ENCODE measurements at regions of chr3 and their contacts with region 1.

Region 1: DNA sequence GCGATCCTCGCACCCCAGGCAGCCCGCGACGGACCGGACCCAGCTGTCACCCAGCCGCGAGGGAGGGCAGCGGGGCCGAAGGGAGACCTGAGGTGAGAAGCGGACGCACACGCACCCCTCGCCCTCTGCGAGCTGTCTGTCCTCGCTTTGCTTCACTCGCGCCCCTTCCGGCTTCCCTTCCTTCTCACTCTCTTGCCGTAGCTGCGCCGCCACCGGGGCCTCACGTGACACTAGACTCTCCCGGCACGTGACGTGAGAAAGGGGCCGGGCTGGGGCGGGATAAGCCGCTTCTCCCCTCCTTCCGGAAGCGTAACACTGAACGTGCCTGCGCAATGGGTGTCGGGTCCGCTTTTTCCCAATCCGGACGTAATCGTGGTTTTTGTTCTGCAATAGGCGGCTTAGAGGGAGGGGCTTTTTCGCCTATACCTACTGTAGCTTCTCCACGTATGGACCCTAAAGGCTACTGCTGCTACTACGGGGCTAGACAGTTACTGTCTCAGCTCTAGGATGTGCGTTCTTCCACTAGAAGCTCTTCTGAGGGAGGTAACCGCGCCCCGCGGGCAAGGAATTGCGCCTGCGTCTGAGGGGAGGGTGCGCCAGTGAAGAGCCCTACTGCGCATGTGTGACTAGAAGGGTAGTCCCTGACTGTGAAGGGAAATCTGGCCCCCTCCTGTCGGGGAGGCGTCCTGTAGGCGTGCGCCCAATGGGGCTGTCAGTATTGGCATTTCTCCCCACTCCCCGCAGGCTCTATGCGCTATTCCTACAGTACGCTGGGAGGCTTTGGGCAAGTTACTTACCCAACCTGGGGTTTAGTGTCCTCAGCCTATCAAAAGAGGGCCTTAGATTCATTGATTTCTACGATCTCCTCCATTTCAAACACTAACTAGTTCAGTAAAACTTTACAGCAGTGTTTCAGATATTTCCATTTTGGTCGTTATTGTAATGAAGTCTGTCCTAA is at the starts of genes ATG3 and SLC35A5:
- DNase-seq: peak; percentile 99
- ATAC-seq: peak; percentile 79
- H3K4me3 ChIP-seq: peak within 1 kb of the TSS; percentile 75 to 99 (median 94)
- H3K4me3 Mint-ChIP-seq: peak within 1 kb of the TSS; percentile 99
- H3K27ac ChIP-seq: peak within 1 kb of the TSS; percentile 93 to 96
- H3K27ac Mint-ChIP-seq: peak within 1 kb of the TSS; percentile 100
- H3K4me1 ChIP-seq: peaks cover 23 to 34% of the 10 kb centered on the region in 2 donors
- H3K4me1 Mint-ChIP-seq: peaks cover 50% of the 10 kb centered on the region
- H3K27me3 ChIP-seq: no peaks in the 10 kb centered on the region
- H3K27me3 Mint-ChIP-seq: no peaks in the 10 kb centered on the region
- CTCF ChIP-seq: no peak
- total RNA-seq, gene ATG3: 48.8 and 54.9 TPM in 2 replicates
- total RNA-seq, gene SLC35A5: 32.1 and 34.9 TPM in 2 replicates

Region 2: GRCh38 chr3:112407214-112407887 is 154.7 kb before region 1 on chr3:
- CTCF ChIA-PET with region 1: no interaction called
- POLR2A ChIA-PET with region 1: no interaction called
- intact Hi-C with region 1: no loop called
- DNase-seq: peak; percentile 52
- ATAC-seq: no peak
- H3K4me3 ChIP-seq: no peak overlapping the region
- H3K4me3 Mint-ChIP-seq: peak overlapping the region; percentile 26
- H3K27ac ChIP-seq: peak overlapping the region; percentile 16 to 76
- H3K27ac Mint-ChIP-seq: peak overlapping the region; percentile 86
- H3K4me1 ChIP-seq: peaks cover 14 to 15% of the 10 kb centered on the region in 2 donors
- H3K4me1 Mint-ChIP-seq: peaks cover 21% of the 10 kb centered on the region
- H3K27me3 ChIP-seq: no peaks in the 10 kb centered on the region
- H3K27me3 Mint-ChIP-seq: no peaks in the 10 kb centered on the region
- CTCF ChIP-seq: no peak

Region 3: GRCh38 chr3:112582244-112582874 is 20.3 kb after region 1 on chr3:
- CTCF ChIA-PET with region 1: interaction called, 5 read pairs
- POLR2A ChIA-PET with region 1: interaction called, 4 read pairs
- intact Hi-C with region 1: loop called (anchors 2 kb)
- DNase-seq: peak; percentile 43
- ATAC-seq: no peak
- H3K4me3 ChIP-seq: no peak overlapping the region
- H3K4me3 Mint-ChIP-seq: no peak overlapping the region
- H3K27ac ChIP-seq: no peak overlapping the region
- H3K27ac Mint-ChIP-seq: no peak overlapping the region
- H3K4me1 ChIP-seq: peaks cover 28 to 32% of the 10 kb centered on the region in 2 donors
- H3K4me1 Mint-ChIP-seq: peaks cover 31% of the 10 kb centered on the region
- H3K27me3 ChIP-seq: no peaks in the 10 kb centered on the region
- H3K27me3 Mint-ChIP-seq: no peaks in the 10 kb centered on the region
- CTCF ChIP-seq: peak; percentile 76